Activated naive CD4-positive, alpha-beta T cell treated with anti-CD3 and anti-CD28 coated beads for 36 hours (primary cell): ENCODE measurements at regions of chr21 and their contacts with region 1.

Region 1: DNA sequence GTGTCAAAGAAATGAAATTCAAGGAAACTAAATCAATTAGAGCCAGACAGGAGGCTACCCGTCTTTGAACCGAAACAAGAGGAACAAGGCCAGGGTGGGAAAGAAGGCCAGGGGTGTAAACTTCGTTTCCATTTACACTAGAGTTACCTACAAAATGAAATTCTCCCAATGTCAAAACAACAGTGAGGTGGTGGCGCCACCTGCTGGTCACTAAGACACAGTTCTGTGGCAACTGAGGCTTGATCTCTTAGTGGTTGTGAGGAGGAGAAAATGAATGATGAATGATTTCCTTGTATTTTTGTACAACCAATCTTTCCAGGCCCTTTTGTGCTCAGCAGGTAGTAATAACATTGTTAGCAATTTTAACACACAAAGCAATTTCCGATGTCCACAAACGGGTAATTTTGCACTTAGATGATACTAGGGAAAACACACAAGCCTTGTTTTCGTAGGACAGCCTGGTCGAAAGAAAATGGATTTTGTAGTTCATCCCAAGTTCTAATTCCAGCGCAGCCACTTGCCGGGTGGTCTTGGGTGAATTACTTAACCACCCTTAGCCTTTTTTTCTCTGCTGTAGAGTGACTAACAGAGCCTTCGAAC is 54.8 kb upstream of the SOD1 start:
- DNase-seq: peak; percentile 83
- H3K4me3 Mint-ChIP-seq: no peak overlapping the region
- H3K27ac Mint-ChIP-seq: no peak overlapping the region
- H3K4me1 Mint-ChIP-seq: peaks cover 7% of the 10 kb centered on the region
- H3K27me3 Mint-ChIP-seq: no peaks in the 10 kb centered on the region

Region 2: GRCh38 chr21:30831194-30831765 is 773.4 kb before region 1 on chr21:
- CTCF ChIA-PET with region 1: no interaction called
- intact Hi-C with region 1: loop called (anchors 10 kb)
- DNase-seq: peak; percentile 65
- H3K4me3 Mint-ChIP-seq: no peak overlapping the region
- H3K27ac Mint-ChIP-seq: no peak overlapping the region
- H3K4me1 Mint-ChIP-seq: no peaks in the 10 kb centered on the region
- H3K27me3 Mint-ChIP-seq: peaks cover 12% of the 10 kb centered on the region

Region 3: DNA sequence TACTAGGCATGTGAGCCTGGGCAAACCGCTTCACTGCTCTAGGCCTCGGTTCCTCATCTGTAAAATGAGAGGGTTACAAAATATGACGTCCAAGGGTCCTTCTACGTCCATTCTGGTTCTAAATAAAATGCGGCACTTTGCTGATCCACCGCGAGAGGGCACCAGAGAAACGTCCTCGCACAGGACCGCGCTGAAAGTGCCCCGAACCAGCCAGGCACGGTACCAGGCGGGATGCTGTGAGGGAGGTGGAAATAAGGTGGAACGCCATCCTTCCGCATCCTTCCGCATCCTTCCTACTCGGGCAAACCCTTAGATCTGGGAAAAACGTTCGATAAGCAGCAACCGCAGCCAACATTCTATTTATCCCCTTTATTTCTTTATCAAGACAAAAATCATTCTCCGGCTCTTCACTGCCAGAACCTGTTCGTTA is 506.1 kb before region 1 on chr21:
- CTCF ChIA-PET with region 1: interaction called, 21 read pairs
- intact Hi-C with region 1: loop called (anchors 1 kb)
- DNase-seq: peak; percentile 83
- H3K4me3 Mint-ChIP-seq: peak overlapping the region; percentile 29
- H3K27ac Mint-ChIP-seq: no peak overlapping the region
- H3K4me1 Mint-ChIP-seq: peaks cover 24% of the 10 kb centered on the region
- H3K27me3 Mint-ChIP-seq: peaks cover 3% of the 10 kb centered on the region

Region 4: DNA sequence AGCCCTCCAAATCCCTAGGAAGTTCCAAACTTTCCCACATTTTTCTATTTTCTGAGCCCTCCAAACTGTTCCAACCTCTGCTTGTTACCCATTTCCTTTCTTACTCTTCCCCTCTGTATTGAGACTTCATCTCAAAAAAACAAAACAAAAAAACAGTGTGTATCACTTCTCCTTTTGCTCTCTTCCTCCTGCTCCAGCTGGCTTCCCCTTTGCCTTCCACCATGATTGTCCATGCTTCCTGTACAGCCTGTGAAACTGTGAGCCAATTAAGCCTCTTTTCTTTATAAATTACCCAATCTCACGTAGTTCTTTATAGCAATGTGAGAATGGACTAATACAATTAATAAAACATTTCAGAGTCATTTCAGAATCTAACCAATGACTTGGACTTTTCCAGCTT is 496.8 kb before region 1 on chr21:
- CTCF ChIA-PET with region 1: interaction called, 6 read pairs
- intact Hi-C with region 1: loop called (anchors 1 kb)
- DNase-seq: no peak
- H3K4me3 Mint-ChIP-seq: no peak overlapping the region
- H3K27ac Mint-ChIP-seq: no peak overlapping the region
- H3K4me1 Mint-ChIP-seq: peaks cover 28% of the 10 kb centered on the region
- H3K27me3 Mint-ChIP-seq: no peaks in the 10 kb centered on the region

Region 5: GRCh38 chr21:31683030-31683429 is 78.3 kb after region 1 on chr21:
- CTCF ChIA-PET with region 1: no interaction called
- intact Hi-C with region 1: no loop called
- DNase-seq: no peak
- H3K4me3 Mint-ChIP-seq: no peak overlapping the region
- H3K27ac Mint-ChIP-seq: no peak overlapping the region
- H3K4me1 Mint-ChIP-seq: no peaks in the 10 kb centered on the region
- H3K27me3 Mint-ChIP-seq: no peaks in the 10 kb centered on the region